Mammary epithelial cell (primary cell): ENCODE measurements at regions of chr6 and their contacts with region 1.

Region 1: GRCh38 chr6:7468382-7469081 is 72.9 kb upstream of the DSP start:
- DNase-seq: peak; percentile 54
- H3K4me3 ChIP-seq: no peak overlapping the region
- H3K27ac ChIP-seq: no peak overlapping the region
- H3K4me1 ChIP-seq: peaks cover 17% of the 10 kb centered on the region
- H3K27me3 ChIP-seq: no peaks in the 10 kb centered on the region
- CTCF ChIP-seq: no peak

Region 2: GRCh38 chr6:7528565-7528964 is 60.0 kb after region 1 on chr6:
- CTCF ChIA-PET with region 1: no interaction called
- dilution Hi-C with region 1: loop called (anchors 5 kb)
- in situ Hi-C with region 1: no loop called
- intact Hi-C with region 1: no loop called
- DNase-seq: peak; percentile 97
- H3K4me3 ChIP-seq: no peak overlapping the region
- H3K27ac ChIP-seq: peak overlapping the region; percentile 48
- H3K4me1 ChIP-seq: peaks cover 31% of the 10 kb centered on the region
- H3K27me3 ChIP-seq: no peaks in the 10 kb centered on the region
- CTCF ChIP-seq: no peak

Region 3: GRCh38 chr6:7615611-7616383 is 147.3 kb after region 1 on chr6:
- CTCF ChIA-PET with region 1: no interaction called
- dilution Hi-C with region 1: no loop called
- in situ Hi-C with region 1: no loop called
- intact Hi-C with region 1: no loop called
- DNase-seq: peak; percentile 62
- H3K4me3 ChIP-seq: no peak overlapping the region
- H3K27ac ChIP-seq: no peak overlapping the region
- H3K4me1 ChIP-seq: peaks cover 22% of the 10 kb centered on the region
- H3K27me3 ChIP-seq: no peaks in the 10 kb centered on the region
- CTCF ChIP-seq: peak; percentile 71 to 81